Esophagus squamous epithelium (tissue), 5 donors: ENCODE measurements at regions of chr1 and their contacts with region 1.

Region 1: GRCh38 chr1:244302889-244303613 is 148.7 kb downstream of the ADSS2 start:
- DNase-seq: no peak
- H3K4me3 ChIP-seq: no peak overlapping the region
- H3K27ac ChIP-seq: no peak overlapping the region
- H3K4me1 ChIP-seq: peaks cover 0 to 40% (median 22%) of the 10 kb centered on the region in 3 donors
- H3K27me3 ChIP-seq: no peaks in the 10 kb centered on the region
- CTCF ChIP-seq: no peak
- POLR2A ChIP-seq: no peak

Region 2: GRCh38 chr1:244451951-244452795 is 149.1 kb after region 1 on chr1:
- intact Hi-C with region 1: loop called (anchors 10 kb)
- DNase-seq: peak; percentile 97
- H3K4me3 ChIP-seq: peak overlapping the region; percentile 51 to 98 (median 82)
- H3K27ac ChIP-seq: peak overlapping the region; percentile 89 to 97 (median 94)
- H3K4me1 ChIP-seq: peaks cover 16 to 62% (median 24%) of the 10 kb centered on the region in 3 donors
- H3K27me3 ChIP-seq: no peaks in the 10 kb centered on the region
- CTCF ChIP-seq: peak; percentile 48 to 65 (median 52)
- POLR2A ChIP-seq: peak in 1 of 4 donors; percentile 42